Posterior cingulate gyrus (tissue), 11 donors: ENCODE measurements at regions of chr11 and their contacts with region 1.

Region 1: GRCh38 chr11:62805076-62805892 is at the start of gene NXF1:
- DNase-seq: peak; percentile 92 to 99 (median 94)

Region 2: GRCh38 chr11:62709247-62710000 is 95.9 kb before region 1 on chr11:
- intact Hi-C with region 1: no loop called
- DNase-seq: peak; percentile 94 to 99 (median 96)

Region 3: GRCh38 chr11:62753736-62754603 is 51.3 kb before region 1 on chr11 and contains the start of gene ZBTB3:
- intact Hi-C with region 1: loop called (anchors 2 kb)
- DNase-seq: peak; percentile 97 to 100 (median 98)